ENCODE measurements at regions of chr10 and their contacts with region 1.

Region 1: GRCh38 chr10:23314835-23315239 is 29.8 kb downstream of the C10orf67 start:
- DNase-seq: peak; percentile 86
- H3K4me3 ChIP-seq: no peak overlapping the region
- H3K27ac ChIP-seq: no peak overlapping the region
- H3K4me1 ChIP-seq: peaks cover 5% of the 10 kb centered on the region
- H3K27me3 ChIP-seq: no peaks in the 10 kb centered on the region
- CTCF ChIP-seq: peak; percentile 77

Region 2: DNA sequence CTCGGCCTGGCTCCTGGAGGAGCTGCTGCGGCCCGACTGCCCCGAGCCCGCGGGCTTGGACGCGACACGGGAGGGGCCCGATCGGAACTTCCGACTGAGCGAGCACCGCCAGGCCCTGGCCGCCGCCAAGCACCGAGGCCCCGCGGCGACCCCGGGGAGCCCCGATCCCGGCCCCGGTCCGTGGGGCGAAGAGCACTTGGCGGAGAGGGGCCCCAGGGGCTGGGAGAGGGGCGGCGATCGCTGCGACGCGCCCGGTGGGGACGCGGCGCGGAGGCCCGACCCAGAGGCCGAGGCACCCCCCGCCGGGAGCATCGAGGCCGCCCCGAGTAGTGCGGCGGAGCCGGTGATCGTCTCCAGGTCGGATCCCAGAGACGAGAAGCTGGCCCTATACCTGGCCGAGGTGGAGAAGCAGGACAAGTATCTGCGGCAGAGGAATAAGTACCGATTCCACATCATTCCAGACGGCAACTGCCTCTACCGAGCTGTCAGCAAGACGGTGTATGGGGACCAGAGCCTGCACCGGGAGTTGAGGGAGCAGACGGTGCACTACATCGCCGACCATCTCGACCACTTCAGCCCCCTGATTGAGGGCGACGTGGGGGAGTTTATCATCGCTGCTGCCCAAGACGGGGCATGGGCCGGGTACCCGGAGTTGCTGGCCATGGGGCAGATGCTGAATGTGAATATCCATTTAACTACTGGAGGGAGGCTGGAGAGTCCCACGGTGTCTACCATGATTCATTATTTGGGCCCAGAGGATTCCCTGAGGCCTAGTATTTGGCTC is 125.3 kb after region 1 on chr10:
- CTCF ChIA-PET with region 1: interaction called, 3 read pairs
- POLR2A ChIA-PET with region 1: no interaction called
- intact Hi-C with region 1: loop called (anchors 5 kb)
- DNase-seq: peak; percentile 61
- H3K4me3 ChIP-seq: peak overlapping the region; percentile 75
- H3K27ac ChIP-seq: peak overlapping the region; percentile 84
- H3K4me1 ChIP-seq: peaks cover 6% of the 10 kb centered on the region
- H3K27me3 ChIP-seq: no peaks in the 10 kb centered on the region
- CTCF ChIP-seq: no peak

Region 3: GRCh38 chr10:23461557-23461956 is 146.7 kb after region 1 on chr10:
- CTCF ChIA-PET with region 1: interaction called, 12 read pairs
- POLR2A ChIA-PET with region 1: no interaction called
- intact Hi-C with region 1: no loop called
- DNase-seq: no peak
- H3K4me3 ChIP-seq: no peak overlapping the region
- H3K27ac ChIP-seq: no peak overlapping the region
- H3K4me1 ChIP-seq: no peaks in the 10 kb centered on the region
- H3K27me3 ChIP-seq: no peaks in the 10 kb centered on the region
- CTCF ChIP-seq: no peak

Region 4: GRCh38 chr10:23525406-23525805 is 210.6 kb after region 1 on chr10:
- CTCF ChIA-PET with region 1: no interaction called
- POLR2A ChIA-PET with region 1: no interaction called
- intact Hi-C with region 1: loop called (anchors 5 kb)
- DNase-seq: peak; percentile 58
- H3K4me3 ChIP-seq: no peak overlapping the region
- H3K27ac ChIP-seq: no peak overlapping the region
- H3K4me1 ChIP-seq: peaks cover 16% of the 10 kb centered on the region
- H3K27me3 ChIP-seq: no peaks in the 10 kb centered on the region
- CTCF ChIP-seq: peak; percentile 64

Region 5: DNA sequence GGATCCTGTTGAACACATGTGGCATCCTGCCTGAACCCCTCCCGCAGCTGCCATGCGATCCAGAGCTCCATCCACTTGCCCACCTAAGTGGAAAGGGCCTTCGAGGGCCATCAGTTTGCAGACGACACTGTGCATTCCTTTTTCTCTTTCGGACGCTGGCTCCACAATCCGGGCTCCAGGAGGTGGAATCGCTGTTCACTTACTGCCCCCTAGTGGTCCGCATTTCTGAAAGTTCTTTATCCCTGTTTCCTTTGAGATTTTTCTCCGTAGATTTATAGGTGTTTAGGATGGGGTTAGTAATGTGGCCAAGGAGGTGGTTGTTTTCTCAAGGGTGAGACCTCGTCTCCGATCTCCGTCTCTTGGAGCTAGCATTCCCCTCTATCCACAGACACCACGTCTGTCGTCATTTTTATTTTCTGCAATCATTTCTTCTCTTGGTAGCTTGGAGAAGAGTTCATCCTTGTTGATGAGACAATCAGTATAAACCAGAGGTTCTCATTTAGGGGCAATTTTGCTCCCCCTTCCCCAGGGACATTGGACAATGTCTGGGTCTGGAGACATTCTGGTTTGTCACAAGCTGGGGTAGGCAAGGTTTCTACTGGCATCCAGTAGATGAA is 1204.3 kb after region 1 on chr10:
- CTCF ChIA-PET with region 1: interaction called, 7 read pairs
- POLR2A ChIA-PET with region 1: no interaction called
- intact Hi-C with region 1: loop called (anchors 5 kb)
- DNase-seq: peak; percentile 88
- H3K4me3 ChIP-seq: no peak overlapping the region
- H3K27ac ChIP-seq: peak overlapping the region; percentile 71
- H3K4me1 ChIP-seq: peaks cover 41% of the 10 kb centered on the region
- H3K27me3 ChIP-seq: no peaks in the 10 kb centered on the region
- CTCF ChIP-seq: peak; percentile 90

Region 6: GRCh38 chr10:24556750-24557742 is 1242.2 kb after region 1 on chr10:
- CTCF ChIA-PET with region 1: no interaction called
- POLR2A ChIA-PET with region 1: no interaction called
- intact Hi-C with region 1: loop called (anchors 10 kb)
- DNase-seq: peak; percentile 85
- H3K4me3 ChIP-seq: no peak overlapping the region
- H3K27ac ChIP-seq: no peak overlapping the region
- H3K4me1 ChIP-seq: peaks cover 11% of the 10 kb centered on the region
- H3K27me3 ChIP-seq: no peaks in the 10 kb centered on the region
- CTCF ChIP-seq: peak; percentile 81

Measured in A673 (cell line).